OCI-LY7 (cell line): ENCODE measurements at regions of chr19 and their contacts with region 1.

Region 1: GRCh38 chr19:40750059-40750873 is at the start of gene ACTMAP:
- DNase-seq: peak; percentile 100
- H3K4me3 ChIP-seq: peak within 1 kb of the TSS; percentile 80
- H3K27ac ChIP-seq: peak within 1 kb of the TSS; percentile 79
- H3K4me1 ChIP-seq: peaks cover 45% of the 10 kb centered on the region
- CTCF ChIP-seq: no peak
- total RNA-seq, gene ACTMAP: 3.3 and 5.0 TPM in 2 replicates

Region 2: GRCh38 chr19:40671404-40671803 is 78.9 kb before region 1 on chr19:
- CTCF ChIA-PET with region 1: no interaction called
- POLR2A ChIA-PET with region 1: no interaction called
- intact Hi-C with region 1: no loop called
- DNase-seq: no peak
- H3K4me3 ChIP-seq: no peak overlapping the region
- H3K27ac ChIP-seq: no peak overlapping the region
- H3K4me1 ChIP-seq: no peaks in the 10 kb centered on the region
- CTCF ChIP-seq: no peak

Region 3: DNA sequence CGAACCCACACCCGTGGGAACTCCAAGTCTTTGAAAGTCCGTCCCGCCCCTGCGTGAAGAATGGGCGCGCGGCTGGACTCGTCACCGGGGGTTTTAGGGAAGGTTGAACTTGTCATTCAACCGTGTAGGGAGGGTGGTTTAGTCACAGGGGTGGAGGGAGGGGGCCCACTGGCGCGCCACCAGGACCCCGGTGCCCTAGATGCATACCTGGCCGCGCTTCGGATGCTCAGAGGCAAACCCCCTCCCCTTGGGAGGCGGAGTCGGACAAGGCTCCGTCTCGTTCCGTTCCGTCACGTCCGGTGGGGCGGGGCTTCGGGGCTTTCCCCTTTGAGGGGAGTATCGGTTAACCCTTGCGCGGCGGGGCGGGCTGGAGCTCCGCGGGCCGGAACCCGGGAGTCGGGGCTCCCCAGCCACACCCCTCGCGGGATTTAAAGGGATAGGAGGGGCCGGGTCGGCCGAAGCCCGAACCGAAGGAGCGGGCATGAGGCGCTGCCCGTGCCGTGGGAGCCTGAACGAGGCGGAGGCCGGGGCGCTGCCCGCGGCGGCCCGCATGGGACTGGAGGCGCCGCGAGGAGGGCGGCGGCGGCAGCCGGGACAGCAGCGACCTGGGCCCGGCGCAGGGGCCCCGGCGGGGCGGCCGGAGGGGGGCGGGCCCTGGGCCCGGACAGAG is 33.5 kb before region 1 on chr19 and contains the starts of genes COQ8B and ITPKC:
- CTCF ChIA-PET with region 1: no interaction called
- POLR2A ChIA-PET with region 1: interaction called, 3 read pairs
- intact Hi-C with region 1: loop called (anchors 1 kb)
- DNase-seq: peak; percentile 99
- H3K4me3 ChIP-seq: peak within 1 kb of the TSS; percentile 70
- H3K27ac ChIP-seq: peak within 1 kb of the TSS; percentile 72
- H3K4me1 ChIP-seq: peaks cover 37% of the 10 kb centered on the region
- CTCF ChIP-seq: no peak
- total RNA-seq, gene COQ8B: 34.9 and 39.3 TPM in 2 replicates
- total RNA-seq, gene ITPKC: 4.0 and 6.5 TPM in 2 replicates

Region 4: DNA sequence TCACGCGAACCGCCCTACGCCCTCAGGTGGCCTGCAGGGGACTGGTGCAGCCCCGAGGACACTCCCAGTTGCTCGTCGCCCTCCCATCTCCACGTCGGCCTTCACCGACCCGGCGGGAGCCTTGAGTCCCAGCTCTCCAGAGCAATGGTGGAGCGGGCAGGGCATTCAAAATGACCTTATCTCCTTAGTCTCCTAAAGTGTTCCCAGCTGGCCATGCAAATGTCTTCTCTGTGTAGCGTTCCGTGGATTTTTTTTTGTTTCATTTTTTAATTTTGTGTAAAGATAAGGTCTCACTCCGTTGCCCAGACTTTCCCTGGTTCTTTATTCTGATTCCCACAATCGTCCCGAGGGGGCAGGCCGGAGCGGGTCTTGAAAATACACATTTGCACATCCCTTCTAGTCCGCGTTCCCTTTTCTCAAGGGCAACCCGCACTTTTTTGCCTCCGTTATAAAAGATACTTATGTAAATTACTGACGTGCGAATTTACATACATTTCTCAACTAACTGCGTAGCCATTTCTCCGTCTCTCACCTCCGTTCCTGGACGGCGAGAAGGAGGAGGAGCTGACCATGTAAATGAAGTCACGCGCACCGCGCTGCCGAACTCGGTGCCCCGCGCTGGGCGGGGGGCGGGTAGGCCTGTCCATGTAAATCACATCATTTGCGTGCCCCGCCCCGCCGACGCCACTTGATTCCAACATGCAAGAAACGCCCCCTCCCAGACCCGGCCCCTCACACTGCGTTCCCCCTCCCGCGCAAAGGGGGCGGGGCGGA is 48.1 kb after region 1 on chr19:
- CTCF ChIA-PET with region 1: no interaction called
- POLR2A ChIA-PET with region 1: interaction called, 3 read pairs
- intact Hi-C with region 1: loop called (anchors 2 kb)
- DNase-seq: peak; percentile 100
- H3K4me3 ChIP-seq: peak overlapping the region; percentile 62
- H3K27ac ChIP-seq: peak overlapping the region; percentile 57
- H3K4me1 ChIP-seq: peaks cover 53% of the 10 kb centered on the region
- CTCF ChIP-seq: peak; percentile 63